Activated CD4-positive, alpha-beta T cell treated with anti-CD3 and anti-CD28 coated beads, Interleukin-2, amount 10 ng/mL, durations not matched to agents 24 days and 14 days (primary cell): ENCODE measurements at regions of chr7 and their contacts with region 1.

Region 1: DNA sequence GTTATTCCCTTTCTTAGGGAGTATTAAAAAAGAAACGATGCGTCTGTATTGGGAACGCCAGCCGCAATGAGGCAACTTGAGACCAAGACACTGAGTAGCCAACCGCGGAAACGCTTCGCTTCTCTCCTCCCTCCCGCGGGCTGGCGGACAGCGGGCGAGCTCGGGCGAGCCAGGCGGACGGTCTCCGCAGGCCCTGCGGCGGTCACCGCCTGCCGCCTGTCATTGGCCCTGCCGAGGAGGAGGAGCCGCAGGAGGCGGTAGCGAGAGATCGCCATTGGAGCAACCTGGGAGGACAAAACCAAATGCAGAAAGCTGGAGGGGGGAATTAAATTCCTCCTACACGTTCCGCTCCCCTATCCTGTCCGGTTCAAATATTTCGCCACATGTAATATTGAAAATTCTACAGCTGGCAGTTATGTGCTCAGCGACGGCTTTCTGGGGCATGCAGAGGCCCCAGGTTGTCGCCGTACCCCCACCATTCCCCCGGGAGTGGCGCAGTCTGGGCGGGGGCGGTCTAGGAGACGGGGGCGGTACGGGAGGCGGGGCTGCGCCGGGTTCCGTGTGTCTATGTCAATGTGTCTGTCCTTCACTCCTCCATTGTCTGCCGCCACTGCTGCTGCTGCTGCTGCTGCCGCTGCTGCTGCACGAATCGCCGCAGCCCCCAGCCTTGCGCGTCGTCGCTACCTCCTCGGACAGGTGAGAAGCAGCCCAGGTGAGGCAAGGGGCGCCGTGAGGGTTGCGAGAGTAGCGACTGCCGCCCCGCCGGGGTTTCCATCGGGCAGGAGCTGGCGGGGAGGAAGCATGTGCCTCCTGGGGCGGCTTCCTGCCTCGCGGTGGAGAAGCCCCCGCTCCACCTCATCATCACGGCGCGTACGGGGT is at the starts of genes ANKMY2 and BZW2:
- DNase-seq: peak; percentile 98
- H3K4me3 Mint-ChIP-seq: peak within 1 kb of the TSS; percentile 93
- H3K27ac Mint-ChIP-seq: peak within 1 kb of the TSS; percentile 99
- H3K4me1 Mint-ChIP-seq: peaks cover 54% of the 10 kb centered on the region
- H3K27me3 Mint-ChIP-seq: no peaks in the 10 kb centered on the region
- total RNA-seq, gene ANKMY2: 8.0 and 8.7 TPM in 2 replicates
- total RNA-seq, gene BZW2: 104 and 113 TPM in 2 replicates

Region 2: GRCh38 chr7:16420649-16421332 is 225.0 kb before region 1 on chr7:
- intact Hi-C with region 1: loop called (anchors 1 kb)
- DNase-seq: peak; percentile 95
- H3K4me3 Mint-ChIP-seq: peak overlapping the region; percentile 89
- H3K27ac Mint-ChIP-seq: peak overlapping the region; percentile 98
- H3K4me1 Mint-ChIP-seq: peaks cover 18% of the 10 kb centered on the region
- H3K27me3 Mint-ChIP-seq: peaks cover 3% of the 10 kb centered on the region

Region 3: DNA sequence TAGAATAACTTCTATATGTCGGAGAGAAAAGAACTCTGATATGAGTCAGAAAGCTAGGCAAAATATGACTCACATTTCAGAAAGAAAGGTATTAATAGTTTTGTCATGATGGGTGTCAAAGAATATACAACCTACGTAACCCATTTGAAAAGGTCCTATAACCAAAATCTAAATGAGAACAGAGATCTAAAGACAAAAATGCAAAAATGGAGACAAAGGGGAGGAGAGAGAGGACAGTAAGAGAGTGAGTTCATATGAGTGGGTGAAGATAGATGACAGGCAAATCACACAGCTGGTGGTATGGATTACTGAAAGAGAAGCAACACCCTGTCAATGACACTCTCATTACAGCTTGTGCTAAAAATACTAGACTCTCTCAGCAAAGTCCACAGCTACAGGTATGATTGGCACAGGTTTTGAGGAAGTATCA is 25.8 kb before region 1 on chr7:
- intact Hi-C with region 1: loop called (anchors 1 kb)
- DNase-seq: peak; percentile 57
- H3K4me3 Mint-ChIP-seq: peak overlapping the region; percentile 43
- H3K27ac Mint-ChIP-seq: peak overlapping the region; percentile 82
- H3K4me1 Mint-ChIP-seq: peaks cover 10% of the 10 kb centered on the region
- H3K27me3 Mint-ChIP-seq: no peaks in the 10 kb centered on the region

Region 4: DNA sequence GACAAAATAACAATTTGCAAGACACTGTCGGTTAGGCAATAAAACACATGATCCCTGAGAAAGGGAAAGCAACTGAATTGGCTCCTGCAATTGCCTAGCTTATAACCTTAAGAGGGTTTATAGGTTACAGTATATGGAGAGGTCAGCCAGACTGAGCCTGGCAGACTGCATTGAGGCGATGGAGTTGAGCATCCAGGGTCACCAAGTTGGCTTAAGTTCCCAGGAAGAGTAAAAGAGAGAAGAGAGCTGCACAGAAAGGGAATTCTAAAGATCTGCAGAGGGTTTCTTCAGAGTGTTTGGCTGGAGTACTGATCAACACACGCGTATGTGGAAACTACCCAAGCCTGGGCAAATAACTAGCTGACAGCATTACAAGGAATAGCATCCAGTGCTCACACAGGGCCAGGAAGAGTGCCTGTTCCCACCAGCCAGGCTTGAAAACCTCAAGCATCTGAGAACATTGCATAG is 11.5 kb before region 1 on chr7:
- intact Hi-C with region 1: no loop called
- DNase-seq: no peak
- H3K4me3 Mint-ChIP-seq: no peak overlapping the region
- H3K27ac Mint-ChIP-seq: no peak overlapping the region
- H3K4me1 Mint-ChIP-seq: peaks cover 6% of the 10 kb centered on the region
- H3K27me3 Mint-ChIP-seq: no peaks in the 10 kb centered on the region

Region 5: GRCh38 chr7:16660702-16661464 is 15.1 kb after region 1 on chr7:
- intact Hi-C with region 1: no loop called
- DNase-seq: no peak
- H3K4me3 Mint-ChIP-seq: no peak overlapping the region
- H3K27ac Mint-ChIP-seq: peak overlapping the region; percentile 3
- H3K4me1 Mint-ChIP-seq: peaks cover 20% of the 10 kb centered on the region
- H3K27me3 Mint-ChIP-seq: no peaks in the 10 kb centered on the region

Region 6: GRCh38 chr7:16688249-16688648 is 42.4 kb after region 1 on chr7:
- intact Hi-C with region 1: loop called (anchors 5 kb)
- DNase-seq: no peak
- H3K4me3 Mint-ChIP-seq: no peak overlapping the region
- H3K27ac Mint-ChIP-seq: no peak overlapping the region
- H3K4me1 Mint-ChIP-seq: peaks cover 24% of the 10 kb centered on the region
- H3K27me3 Mint-ChIP-seq: no peaks in the 10 kb centered on the region

Region 7: GRCh38 chr7:16753102-16753931 is 107.5 kb after region 1 on chr7 and contains the start of gene TSPAN13:
- intact Hi-C with region 1: loop called (anchors 2 kb)
- DNase-seq: peak; percentile 90
- H3K4me3 Mint-ChIP-seq: peak within 1 kb of the TSS; percentile 77
- H3K27ac Mint-ChIP-seq: no peak within 1 kb of the TSS
- H3K4me1 Mint-ChIP-seq: peaks cover 8% of the 10 kb centered on the region
- H3K27me3 Mint-ChIP-seq: peaks cover 44% of the 10 kb centered on the region
- total RNA-seq, gene TSPAN13: 0.91 and 1.1 TPM in 2 replicates

Region 8: DNA sequence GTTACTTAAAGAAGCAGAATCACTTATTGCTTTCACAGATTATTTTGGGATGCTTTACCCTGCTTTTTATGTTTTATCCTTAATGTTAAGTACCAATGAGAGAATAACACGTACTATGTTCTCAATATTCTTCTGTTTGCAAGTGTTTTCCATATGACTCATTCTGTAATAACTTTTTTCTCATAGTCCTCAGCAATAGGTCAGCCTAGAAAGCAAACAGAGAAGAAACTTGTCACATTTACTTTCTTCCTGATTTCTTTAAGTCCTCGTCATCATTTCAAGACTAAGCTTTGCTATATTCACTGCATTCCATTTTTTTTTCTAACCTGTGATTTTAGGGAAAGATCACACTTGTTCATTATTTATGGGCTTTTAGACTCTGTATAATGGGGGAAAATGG is 165.7 kb after region 1 on chr7:
- intact Hi-C with region 1: no loop called
- DNase-seq: no peak
- H3K4me3 Mint-ChIP-seq: no peak overlapping the region
- H3K27ac Mint-ChIP-seq: no peak overlapping the region
- H3K4me1 Mint-ChIP-seq: no peaks in the 10 kb centered on the region
- H3K27me3 Mint-ChIP-seq: peaks cover 13% of the 10 kb centered on the region